ENCODE measurements at regions of chr6 and their contacts with region 1.

Region 1: DNA sequence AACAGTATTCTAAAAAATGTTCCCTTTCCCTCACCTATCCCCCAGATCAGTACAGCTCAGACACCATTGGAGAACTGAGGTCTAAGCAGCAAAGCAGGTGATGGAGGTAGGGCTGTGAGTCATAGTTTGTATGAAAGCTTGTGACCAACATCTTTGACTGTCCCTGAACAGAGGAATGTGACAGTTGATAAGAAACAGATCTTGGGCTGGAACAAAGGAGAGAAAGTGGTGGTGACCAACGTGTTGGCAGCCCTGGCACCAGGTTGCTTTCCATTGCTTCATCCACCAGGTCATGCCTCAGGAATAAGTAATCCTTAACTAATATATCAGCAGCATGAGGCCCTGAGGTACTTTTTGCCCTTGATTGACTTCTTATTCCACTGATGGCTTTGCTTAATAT is 19.9 kb upstream of the CRIP3 start:
- DNase-seq: peak; percentile 2
- H3K4me3 ChIP-seq: no peak overlapping the region
- H3K27ac ChIP-seq: no peak overlapping the region
- H3K4me1 ChIP-seq: no peaks in the 10 kb centered on the region
- H3K27me3 ChIP-seq: no peaks in the 10 kb centered on the region
- CTCF ChIP-seq: no peak

Region 2: GRCh38 chr6:43257367-43258145 is 71.0 kb before region 1 on chr6:
- CTCF ChIA-PET with region 1: no interaction called
- dilution Hi-C with region 1: loop called (anchors 5 kb)
- in situ Hi-C with region 1: loop called in 1 of 2 experiments (anchors 10 kb)
- intact Hi-C with region 1: no loop called
- DNase-seq: no peak
- H3K4me3 ChIP-seq: no peak overlapping the region
- H3K27ac ChIP-seq: no peak overlapping the region
- H3K4me1 ChIP-seq: no peaks in the 10 kb centered on the region
- H3K27me3 ChIP-seq: no peaks in the 10 kb centered on the region
- CTCF ChIP-seq: no peak

Region 3: GRCh38 chr6:43386492-43386891 is 58.0 kb after region 1 on chr6:
- CTCF ChIA-PET with region 1: no interaction called
- dilution Hi-C with region 1: loop called (anchors 5 kb)
- in situ Hi-C with region 1: no loop called
- intact Hi-C with region 1: no loop called
- DNase-seq: no peak
- H3K4me3 ChIP-seq: no peak overlapping the region
- H3K27ac ChIP-seq: no peak overlapping the region
- H3K4me1 ChIP-seq: peaks cover 12% of the 10 kb centered on the region
- H3K27me3 ChIP-seq: no peaks in the 10 kb centered on the region
- CTCF ChIP-seq: peak in 1 of 2 donors; percentile 16

Measured in mammary epithelial cell (primary cell).